CD8-positive, alpha-beta T cell (primary cell): ENCODE measurements at regions of chr9 and their contacts with region 1.

Region 1: DNA sequence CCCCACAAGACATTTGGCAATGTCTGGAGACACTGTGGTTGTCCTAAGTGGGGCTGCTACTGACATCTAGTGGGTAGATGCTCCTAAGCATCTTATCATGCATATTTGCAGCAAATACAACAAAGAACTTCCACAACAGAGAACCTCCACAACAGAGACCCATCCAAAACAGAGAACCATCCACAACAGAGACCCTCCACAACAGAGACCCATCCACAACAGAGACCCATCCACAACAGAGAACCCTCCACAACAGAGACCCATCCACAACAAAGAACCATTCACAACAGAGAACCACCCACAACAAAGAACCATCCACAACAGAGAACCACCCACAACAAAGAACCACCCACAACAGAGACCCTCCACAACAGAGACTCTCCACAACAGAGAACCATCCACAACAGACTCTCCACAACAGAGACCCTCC is 32.8 kb downstream of the ARPC5L start:
- DNase-seq: peak in 8 of 9 experiments; percentile 21 to 83 (median 53)
- ATAC-seq: peak; percentile 97
- H3K4me3 ChIP-seq: no peak overlapping the region
- H3K4me3 Mint-ChIP-seq: no peak overlapping the region
- H3K27ac ChIP-seq: no peak overlapping the region
- H3K27ac Mint-ChIP-seq: peak overlapping the region; percentile 81
- H3K4me1 ChIP-seq: no peaks in the 10 kb centered on the region
- H3K4me1 Mint-ChIP-seq: peaks cover 13% of the 10 kb centered on the region
- H3K27me3 ChIP-seq: peaks cover 0 to 7% of the 10 kb centered on the region in 2 experiments
- H3K27me3 Mint-ChIP-seq: peaks cover 13% of the 10 kb centered on the region
- CTCF ChIP-seq: peak; percentile 63

Region 2: GRCh38 chr9:124852829-124853531 is 41.8 kb before region 1 on chr9 and contains the start of gene WDR38:
- CTCF ChIA-PET with region 1: interaction called, 8 read pairs
- POLR2A ChIA-PET with region 1: no interaction called
- intact Hi-C with region 1: loop called (anchors 1 kb)
- DNase-seq: peak; percentile 64 to 95 (median 80)
- ATAC-seq: peak; percentile 83
- H3K4me3 ChIP-seq: peak within 1 kb of the TSS; percentile 37 to 44
- H3K4me3 Mint-ChIP-seq: peak within 1 kb of the TSS; percentile 65
- H3K27ac ChIP-seq: peak within 1 kb of the TSS in 1 of 2 experiments; percentile 73
- H3K27ac Mint-ChIP-seq: peak within 1 kb of the TSS; percentile 64
- H3K4me1 ChIP-seq: peaks cover 12% of the 10 kb centered on the region
- H3K4me1 Mint-ChIP-seq: peaks cover 9% of the 10 kb centered on the region
- H3K27me3 ChIP-seq: no peaks in the 10 kb centered on the region
- H3K27me3 Mint-ChIP-seq: peaks cover 9% of the 10 kb centered on the region
- CTCF ChIP-seq: peak; percentile 98
- total RNA-seq, gene WDR38: not detected

Region 3: GRCh38 chr9:124861342-124862229 is 33.2 kb before region 1 on chr9 and contains the starts of genes ARPC5L and RPL35:
- CTCF ChIA-PET with region 1: interaction called, 5 read pairs
- POLR2A ChIA-PET with region 1: interaction called, 4 read pairs
- intact Hi-C with region 1: loop called in 1 of 2 experiments (anchors 1 kb)
- DNase-seq: peak; percentile 90 to 97 (median 95)
- ATAC-seq: peak; percentile 95
- H3K4me3 ChIP-seq: peak within 1 kb of the TSS; percentile 67 to 90
- H3K4me3 Mint-ChIP-seq: peak within 1 kb of the TSS; percentile 97
- H3K27ac ChIP-seq: peak within 1 kb of the TSS; percentile 88 to 93
- H3K27ac Mint-ChIP-seq: peak within 1 kb of the TSS; percentile 98
- H3K4me1 ChIP-seq: peaks cover 16% of the 10 kb centered on the region
- H3K4me1 Mint-ChIP-seq: peaks cover 31% of the 10 kb centered on the region
- H3K27me3 ChIP-seq: no peaks in the 10 kb centered on the region
- H3K27me3 Mint-ChIP-seq: no peaks in the 10 kb centered on the region
- CTCF ChIP-seq: no peak
- total RNA-seq, gene ARPC5L: 43.2 to 45.5 TPM
- total RNA-seq, gene RPL35: 1,798 to 1,805 TPM

Region 4: DNA sequence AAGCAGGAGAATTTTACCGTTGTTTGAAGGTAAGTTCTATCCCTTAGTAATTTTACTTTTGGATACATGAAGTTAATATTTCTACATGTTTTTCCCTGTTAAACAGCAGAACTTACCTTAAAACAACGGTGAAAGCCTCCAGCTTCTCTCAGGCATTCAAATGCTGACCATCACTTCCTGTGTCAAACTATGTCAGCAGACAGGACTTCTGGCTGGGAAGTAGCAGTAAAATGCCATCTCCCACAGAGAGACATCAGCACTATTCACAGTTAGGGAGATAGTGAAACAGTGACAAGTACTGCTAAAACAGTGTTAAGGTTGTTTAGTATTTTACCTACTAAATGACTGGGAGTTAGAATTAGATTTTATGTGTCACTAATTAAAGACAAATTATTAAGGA is 80.4 kb after region 1 on chr9:
- CTCF ChIA-PET with region 1: no interaction called
- POLR2A ChIA-PET with region 1: no interaction called
- intact Hi-C with region 1: no loop called
- DNase-seq: peak in 1 of 9 experiments; percentile 9
- ATAC-seq: no peak
- H3K4me3 ChIP-seq: no peak overlapping the region
- H3K4me3 Mint-ChIP-seq: no peak overlapping the region
- H3K27ac ChIP-seq: no peak overlapping the region
- H3K27ac Mint-ChIP-seq: no peak overlapping the region
- H3K4me1 ChIP-seq: no peaks in the 10 kb centered on the region
- H3K4me1 Mint-ChIP-seq: no peaks in the 10 kb centered on the region
- H3K27me3 ChIP-seq: no peaks in the 10 kb centered on the region
- H3K27me3 Mint-ChIP-seq: no peaks in the 10 kb centered on the region
- CTCF ChIP-seq: no peak

Region 5: DNA sequence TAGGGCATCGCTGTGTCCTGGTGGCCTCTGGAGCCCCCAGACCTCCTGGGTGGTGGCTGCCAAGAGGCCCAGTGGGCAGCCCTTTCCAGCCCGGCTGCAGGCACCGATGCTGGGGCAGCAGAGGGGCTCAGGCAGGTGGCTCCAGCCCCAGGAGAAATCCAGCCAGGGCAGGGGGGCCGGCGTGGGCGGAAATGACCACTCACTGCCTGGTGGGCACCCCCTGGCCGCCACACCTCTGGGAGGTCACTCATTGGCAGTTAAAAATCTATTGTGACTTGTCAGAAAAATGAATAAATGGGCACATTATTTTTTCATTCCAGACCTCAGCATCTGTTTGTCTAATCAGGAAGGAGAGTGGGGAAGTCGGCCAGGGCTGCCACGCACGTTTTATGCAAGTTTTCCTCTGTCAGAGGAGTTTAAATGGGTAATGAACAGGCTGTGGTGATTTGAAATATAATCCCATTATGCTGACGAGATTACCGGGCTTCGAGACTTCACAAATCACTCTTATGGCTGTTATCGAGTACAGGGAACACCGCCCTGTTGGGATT is 538.8 kb after region 1 on chr9:
- CTCF ChIA-PET with region 1: no interaction called
- POLR2A ChIA-PET with region 1: no interaction called
- intact Hi-C with region 1: no loop called
- DNase-seq: no peak
- ATAC-seq: no peak
- H3K4me3 ChIP-seq: no peak overlapping the region
- H3K4me3 Mint-ChIP-seq: no peak overlapping the region
- H3K27ac ChIP-seq: no peak overlapping the region
- H3K27ac Mint-ChIP-seq: no peak overlapping the region
- H3K4me1 ChIP-seq: no peaks in the 10 kb centered on the region
- H3K4me1 Mint-ChIP-seq: no peaks in the 10 kb centered on the region
- H3K27me3 ChIP-seq: no peaks in the 10 kb centered on the region
- H3K27me3 Mint-ChIP-seq: no peaks in the 10 kb centered on the region
- CTCF ChIP-seq: no peak

Region 6: GRCh38 chr9:125997196-125997823 is 1102.6 kb after region 1 on chr9:
- CTCF ChIA-PET with region 1: no interaction called
- POLR2A ChIA-PET with region 1: no interaction called
- intact Hi-C with region 1: no loop called
- DNase-seq: no peak
- ATAC-seq: no peak
- H3K4me3 ChIP-seq: no peak overlapping the region
- H3K4me3 Mint-ChIP-seq: no peak overlapping the region
- H3K27ac ChIP-seq: no peak overlapping the region
- H3K27ac Mint-ChIP-seq: no peak overlapping the region
- H3K4me1 ChIP-seq: no peaks in the 10 kb centered on the region
- H3K4me1 Mint-ChIP-seq: no peaks in the 10 kb centered on the region
- H3K27me3 ChIP-seq: no peaks in the 10 kb centered on the region
- H3K27me3 Mint-ChIP-seq: peaks cover 2% of the 10 kb centered on the region
- CTCF ChIP-seq: no peak